ENCODE measurements at regions of chr16 and their contacts with region 1.

Region 1: GRCh38 chr16:27179500-27180072 is 23.7 kb upstream of the KDM8 start:
- DNase-seq: peak; percentile 53 to 62
- H3K4me3 ChIP-seq: no peak overlapping the region
- H3K27ac ChIP-seq: no peak overlapping the region
- H3K4me1 ChIP-seq: no peaks in the 10 kb centered on the region
- H3K27me3 ChIP-seq: no peaks in the 10 kb centered on the region
- CTCF ChIP-seq: peak; percentile 50 to 69 (median 58)
- POLR2A ChIP-seq: no peak

Region 2: GRCh38 chr16:26905336-26905735 is 274.2 kb before region 1 on chr16:
- intact Hi-C with region 1: no loop called
- DNase-seq: no peak
- H3K4me3 ChIP-seq: no peak overlapping the region
- H3K27ac ChIP-seq: no peak overlapping the region
- H3K4me1 ChIP-seq: no peaks in the 10 kb centered on the region
- H3K27me3 ChIP-seq: no peaks in the 10 kb centered on the region
- CTCF ChIP-seq: no peak
- POLR2A ChIP-seq: no peak

Region 3: DNA sequence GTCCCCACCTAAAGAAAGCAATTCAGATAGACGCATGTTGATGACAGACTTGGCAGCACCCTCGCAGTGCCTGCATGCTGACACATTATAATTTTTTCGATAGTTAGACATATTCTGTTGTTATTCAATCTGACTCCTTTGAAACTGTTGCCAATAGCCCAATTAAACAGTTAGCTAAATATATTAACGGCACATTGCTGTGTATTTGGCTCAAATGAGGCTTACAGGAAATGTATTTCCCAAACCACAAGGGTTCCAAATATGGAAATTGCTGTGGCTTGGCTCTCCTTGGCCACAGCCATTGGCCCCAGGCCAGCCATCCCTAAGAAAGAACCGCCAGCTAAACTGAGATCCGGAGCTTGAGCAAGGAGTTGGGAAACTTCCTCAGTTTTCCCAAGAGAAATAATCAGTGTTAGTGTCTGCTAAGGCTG is 81.8 kb before region 1 on chr16:
- intact Hi-C with region 1: no loop called
- DNase-seq: peak; percentile 13 to 22
- H3K4me3 ChIP-seq: no peak overlapping the region
- H3K27ac ChIP-seq: no peak overlapping the region
- H3K4me1 ChIP-seq: peaks cover 0 to 3% of the 10 kb centered on the region in 2 donors
- H3K27me3 ChIP-seq: no peaks in the 10 kb centered on the region
- CTCF ChIP-seq: no peak
- POLR2A ChIP-seq: no peak

Region 4: GRCh38 chr16:27367461-27368357 is 188.1 kb after region 1 on chr16:
- intact Hi-C with region 1: loop called (anchors 2 kb)
- DNase-seq: peak; percentile 69 to 71
- H3K4me3 ChIP-seq: no peak overlapping the region
- H3K27ac ChIP-seq: peak overlapping the region in 1 of 3 donors; percentile 52
- H3K4me1 ChIP-seq: peaks cover 3 to 7% of the 10 kb centered on the region in 2 donors
- H3K27me3 ChIP-seq: no peaks in the 10 kb centered on the region
- CTCF ChIP-seq: peak in 5 of 6 experiments; percentile 50 to 85 (median 71)
- POLR2A ChIP-seq: no peak

Region 5: DNA sequence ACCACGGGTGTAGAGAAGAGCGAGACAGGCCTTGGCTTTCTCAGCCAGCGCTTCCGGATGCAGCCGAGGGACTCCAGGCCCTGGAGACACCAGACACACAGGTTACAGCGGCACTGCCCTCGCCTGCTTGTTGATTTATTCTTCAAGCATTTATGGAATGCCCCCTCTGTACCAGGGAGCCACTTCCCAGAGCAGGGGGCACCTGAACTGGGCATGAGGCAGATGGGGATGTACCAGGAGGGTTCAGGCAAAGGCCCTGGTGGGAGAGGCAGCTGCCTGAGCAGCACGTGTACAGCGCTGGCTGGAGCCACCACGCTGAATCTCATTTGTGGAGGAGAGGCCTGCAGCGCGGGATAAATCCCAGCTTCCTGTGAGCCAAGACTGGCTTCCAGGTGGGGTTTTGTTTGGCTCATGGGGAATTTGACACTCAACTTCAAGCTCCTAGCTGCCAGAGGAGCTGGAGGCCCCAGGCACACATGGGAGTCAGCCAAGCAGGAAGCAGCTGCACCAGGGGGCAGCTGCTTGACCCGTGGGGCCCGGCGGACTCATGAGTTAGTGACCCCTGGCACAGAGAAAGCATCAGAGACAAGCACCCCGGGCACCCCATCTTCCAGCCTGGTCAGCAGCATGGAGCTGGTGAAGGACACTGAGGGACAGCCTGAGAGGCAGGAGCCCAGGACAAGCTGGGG is 282.0 kb after region 1 on chr16:
- intact Hi-C with region 1: loop called (anchors 10 kb)
- DNase-seq: no peak
- H3K4me3 ChIP-seq: no peak overlapping the region
- H3K27ac ChIP-seq: peak overlapping the region in 1 of 3 donors; percentile 28
- H3K4me1 ChIP-seq: peaks cover 0 to 7% of the 10 kb centered on the region in 2 donors
- H3K27me3 ChIP-seq: no peaks in the 10 kb centered on the region
- CTCF ChIP-seq: no peak
- POLR2A ChIP-seq: no peak